ENCODE measurements at regions of chr1 and their contacts with region 1.

Region 1: GRCh38 chr1:163174524-163175437 is 27.9 kb downstream of the RGS5 start:
- DNase-seq: peak; percentile 74
- H3K4me3 Mint-ChIP-seq: no peak overlapping the region
- H3K27ac Mint-ChIP-seq: no peak overlapping the region
- H3K4me1 Mint-ChIP-seq: no peaks in the 10 kb centered on the region
- H3K27me3 Mint-ChIP-seq: peaks cover 7% of the 10 kb centered on the region

Region 2: DNA sequence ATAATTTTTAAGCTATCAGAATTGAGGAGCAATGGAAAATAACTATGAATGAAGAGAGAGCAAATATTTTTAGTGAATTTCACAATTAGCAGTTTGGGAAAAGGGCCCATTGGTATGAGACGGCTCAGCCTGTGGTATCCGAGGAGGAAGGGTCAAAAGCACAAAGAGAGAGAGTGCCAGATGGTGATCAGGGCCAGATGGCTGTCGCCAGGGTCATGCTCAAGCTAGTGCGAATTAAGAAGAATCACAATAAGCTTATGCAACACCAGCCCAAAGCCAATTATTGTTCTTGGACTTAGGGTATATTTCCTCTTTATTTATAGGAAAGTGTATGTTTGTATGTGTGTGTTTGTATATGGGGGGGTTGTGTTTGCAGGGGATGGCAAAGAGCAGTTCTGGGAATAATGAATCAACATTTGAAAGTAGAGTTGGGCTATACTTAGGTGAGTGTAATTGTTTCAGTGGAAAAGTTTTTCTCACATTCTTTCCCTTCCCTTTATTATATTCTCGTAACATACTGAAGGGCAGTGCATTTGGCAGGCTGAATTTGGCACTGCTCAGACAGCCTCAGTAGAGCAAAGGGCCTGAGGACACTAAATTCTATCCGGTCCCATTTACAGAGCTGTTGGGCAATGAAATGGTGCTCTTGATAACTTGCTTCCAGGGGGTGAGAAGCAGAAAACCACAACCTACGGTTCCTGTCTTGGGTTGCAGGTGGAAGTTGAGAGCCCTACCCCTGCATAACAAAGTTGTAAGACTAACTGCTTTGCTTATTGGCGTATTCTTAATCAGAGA is 562.0 kb before region 1 on chr1:
- CTCF ChIA-PET with region 1: no interaction called
- intact Hi-C with region 1: loop called (anchors 10 kb)
- DNase-seq: no peak
- H3K4me3 Mint-ChIP-seq: no peak overlapping the region
- H3K27ac Mint-ChIP-seq: no peak overlapping the region
- H3K4me1 Mint-ChIP-seq: no peaks in the 10 kb centered on the region
- H3K27me3 Mint-ChIP-seq: no peaks in the 10 kb centered on the region

Region 3: GRCh38 chr1:162854245-162854882 is 320.4 kb before region 1 on chr1:
- CTCF ChIA-PET with region 1: interaction called, 23 read pairs
- intact Hi-C with region 1: loop called (anchors 1 kb)
- DNase-seq: peak; percentile 79
- H3K4me3 Mint-ChIP-seq: no peak overlapping the region
- H3K27ac Mint-ChIP-seq: no peak overlapping the region
- H3K4me1 Mint-ChIP-seq: no peaks in the 10 kb centered on the region
- H3K27me3 Mint-ChIP-seq: no peaks in the 10 kb centered on the region

Region 4: DNA sequence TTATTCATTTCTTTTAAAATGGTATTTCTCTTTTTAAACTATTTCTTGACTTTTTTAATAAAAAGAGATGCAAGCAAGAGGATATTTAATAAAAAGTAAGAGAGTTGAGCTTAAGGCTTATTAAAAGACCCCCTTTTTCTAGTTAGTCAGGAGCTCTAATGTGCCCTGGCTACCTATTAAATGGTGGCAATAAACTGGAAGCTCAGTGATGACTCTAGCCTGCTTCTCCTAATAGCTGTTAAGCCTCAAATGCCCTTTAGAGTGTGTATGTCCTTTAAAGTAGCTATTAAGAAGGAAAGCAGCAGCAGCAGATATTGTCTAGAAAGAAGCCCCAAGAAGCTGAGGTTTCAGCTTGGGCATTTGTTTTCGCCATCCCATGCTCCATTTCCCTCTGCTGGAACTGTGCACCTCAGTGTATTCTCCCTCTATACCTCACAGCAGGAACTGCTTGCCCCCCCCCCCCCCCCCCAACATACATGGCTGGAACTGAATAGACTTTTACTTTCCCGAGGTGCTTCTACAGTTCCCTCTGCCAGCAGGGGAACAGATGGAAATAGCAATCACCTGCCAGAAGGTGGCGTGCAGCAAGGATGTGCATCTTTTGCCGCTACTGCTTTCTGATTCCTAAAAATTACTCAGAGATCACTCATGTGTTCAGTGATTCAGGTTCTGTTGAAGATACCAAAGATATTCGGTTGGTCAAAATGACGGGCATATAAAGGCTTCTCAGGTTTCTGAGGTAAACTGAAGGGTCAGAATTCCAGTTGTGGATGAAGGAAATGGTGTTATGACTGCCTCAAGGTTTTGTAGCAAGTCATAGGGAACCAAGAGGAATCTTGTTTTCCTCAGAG is 103.2 kb before region 1 on chr1:
- CTCF ChIA-PET with region 1: interaction called, 4 read pairs
- intact Hi-C with region 1: loop called (anchors 2 kb)
- DNase-seq: peak; percentile 64
- H3K4me3 Mint-ChIP-seq: no peak overlapping the region
- H3K27ac Mint-ChIP-seq: no peak overlapping the region
- H3K4me1 Mint-ChIP-seq: no peaks in the 10 kb centered on the region
- H3K27me3 Mint-ChIP-seq: peaks cover 23% of the 10 kb centered on the region

Measured in activated naive CD4-positive, alpha-beta T cell treated with anti-CD3 and anti-CD28 coated beads for 36 hours (primary cell).